GM12878 (cell line): ENCODE measurements at regions of chr17 and their contacts with region 1.

Region 1: DNA sequence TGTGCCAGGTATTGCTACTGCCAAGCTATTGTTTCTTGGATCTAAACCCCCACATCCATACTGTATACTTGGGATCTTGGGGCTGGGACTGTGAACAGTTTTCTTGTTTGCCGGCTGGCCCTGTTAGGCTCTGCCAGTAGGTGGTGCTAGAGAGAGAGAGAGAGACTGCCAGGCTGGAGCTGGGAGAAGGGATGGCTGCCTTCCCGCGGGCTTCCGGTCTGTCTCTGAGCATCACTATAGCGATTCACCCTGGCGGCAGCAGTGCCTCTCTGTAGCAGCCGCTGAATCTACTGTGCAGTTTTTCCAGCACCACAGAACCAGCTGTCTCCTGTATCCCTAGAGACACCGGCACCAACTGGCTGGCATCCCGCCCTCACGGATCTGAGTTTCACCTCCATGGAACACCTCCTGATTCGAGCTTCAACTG is 201.2 kb downstream of the UTP18 start:
- DNase-seq: no peak
- ATAC-seq: peak; percentile 86
- H3K4me3 ChIP-seq: no peak overlapping the region
- H3K27ac ChIP-seq: no peak overlapping the region
- H3K4me1 ChIP-seq: no peaks in the 10 kb centered on the region
- H3K27me3 ChIP-seq: no peaks in the 10 kb centered on the region
- CTCF ChIP-seq: peak; percentile 70 to 96 (median 87)
- EP300 ChIP-seq: no peak
- POLR2A ChIP-seq: no peak
- RAD21 ChIP-seq: peak; percentile 27; the same call in 1 of the 2 replicates

Region 2: DNA sequence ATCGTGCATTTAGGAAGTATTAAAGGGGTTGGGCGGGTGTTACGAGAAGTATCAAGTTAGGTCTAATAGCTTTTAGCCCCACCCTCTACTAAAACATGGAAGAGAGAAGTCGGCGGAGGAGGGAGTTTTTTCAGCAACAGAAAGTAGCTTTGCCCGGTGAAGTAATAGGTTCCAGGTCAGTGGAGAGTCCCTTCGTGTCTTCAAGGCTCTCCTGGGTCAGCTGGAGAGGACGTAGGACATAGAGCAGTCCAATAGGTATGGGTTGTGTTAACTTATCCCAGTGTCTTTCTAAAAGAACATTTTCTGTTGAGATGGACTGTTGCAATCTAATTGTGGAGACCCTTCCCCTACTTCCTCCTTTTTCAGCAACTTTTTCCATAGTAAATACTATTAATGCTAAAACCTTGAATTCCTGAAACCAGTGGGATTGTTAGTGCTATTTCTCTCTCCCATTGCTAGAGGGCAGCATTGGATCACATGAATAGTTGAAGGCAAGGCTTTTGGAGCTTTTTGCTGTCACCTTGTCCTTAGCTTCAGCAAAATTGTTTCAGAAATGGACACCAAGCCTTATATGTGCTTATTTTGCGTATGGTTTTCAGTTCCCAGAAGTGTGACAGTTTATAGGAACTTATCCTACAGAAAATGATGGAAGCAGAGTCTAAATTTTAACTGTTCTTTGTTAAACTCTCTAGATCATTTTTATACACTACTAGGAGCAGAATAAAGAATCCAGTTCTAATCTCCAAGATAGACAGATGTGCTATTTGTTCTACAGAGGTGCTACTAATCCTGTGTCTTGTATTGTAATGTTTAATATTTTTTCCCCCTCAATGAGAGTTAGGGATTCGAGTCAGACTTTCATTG is 162.9 kb before region 1 on chr17:
- CTCF ChIA-PET with region 1: interaction called, 14 read pairs
- POLR2A ChIA-PET with region 1: no interaction called
- RAD21 ChIA-PET with region 1: no interaction called
- SMC1A ChIA-PET with region 1: no interaction called
- in situ Hi-C with region 1: no loop called
- intact Hi-C with region 1: no loop called
- DNase-seq: no peak
- ATAC-seq: 0 out of 3 replicates have a peak, but pooled peaks have one; percentile 38
- H3K4me3 ChIP-seq: no peak overlapping the region
- H3K27ac ChIP-seq: no peak overlapping the region
- H3K4me1 ChIP-seq: no peaks in the 10 kb centered on the region
- H3K27me3 ChIP-seq: no peaks in the 10 kb centered on the region
- CTCF ChIP-seq: peak; percentile 62 to 68 (median 63); a peak in 5 of 6 replicates
- EP300 ChIP-seq: no peak
- POLR2A ChIP-seq: no peak
- RAD21 ChIP-seq: peak; percentile 63

Region 3: GRCh38 chr17:51371732-51372151 is 89.8 kb before region 1 on chr17:
- CTCF ChIA-PET with region 1: interaction called, 12 read pairs
- POLR2A ChIA-PET with region 1: no interaction called
- RAD21 ChIA-PET with region 1: interaction called, 3 read pairs
- SMC1A ChIA-PET with region 1: no interaction called
- in situ Hi-C with region 1: no loop called
- intact Hi-C with region 1: no loop called
- DNase-seq: peak; percentile 28
- ATAC-seq: peak; percentile 92
- H3K4me3 ChIP-seq: peak overlapping the region; percentile 63; the same call in 1 of the 2 replicates
- H3K27ac ChIP-seq: 0 out of 2 replicates have a peak overlapping the region, but pooled peaks have one; percentile 50
- H3K4me1 ChIP-seq: peaks cover 3% of the 10 kb centered on the region; the same call in 1 of the 2 replicates
- H3K27me3 ChIP-seq: no peaks in the 10 kb centered on the region
- CTCF ChIP-seq: peak; percentile 50 to 74 (median 62)
- EP300 ChIP-seq: no peak
- POLR2A ChIP-seq: no peak
- RAD21 ChIP-seq: peak; percentile 72

Region 4: DNA sequence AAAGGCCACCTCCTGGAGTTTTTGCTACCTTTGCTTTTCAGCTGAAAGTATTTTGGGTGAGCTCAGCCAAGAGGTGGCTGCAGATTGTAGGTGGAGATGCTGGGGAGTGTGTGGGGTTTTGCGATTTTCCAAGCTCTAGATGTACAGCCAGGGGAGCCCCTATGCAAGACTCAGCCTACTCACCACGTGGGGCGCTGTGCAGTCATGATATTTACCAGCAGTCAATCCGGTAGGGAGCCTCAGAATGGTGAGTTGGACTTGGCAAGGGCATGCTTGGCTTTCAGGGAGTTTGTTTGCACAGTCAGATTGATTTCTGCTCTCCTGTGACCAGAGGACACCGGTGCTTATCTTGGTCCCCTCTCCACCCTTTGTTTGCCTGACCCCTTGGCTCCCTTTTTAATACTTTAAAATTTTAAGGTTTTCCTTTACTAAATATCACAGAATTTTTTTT is 25.9 kb before region 1 on chr17:
- CTCF ChIA-PET with region 1: interaction called, 12 read pairs
- POLR2A ChIA-PET with region 1: no interaction called
- RAD21 ChIA-PET with region 1: no interaction called
- SMC1A ChIA-PET with region 1: no interaction called
- in situ Hi-C with region 1: no loop called
- intact Hi-C with region 1: no loop called
- DNase-seq: no peak
- ATAC-seq: peak; percentile 86
- H3K4me3 ChIP-seq: no peak overlapping the region
- H3K27ac ChIP-seq: no peak overlapping the region
- H3K4me1 ChIP-seq: no peaks in the 10 kb centered on the region
- H3K27me3 ChIP-seq: no peaks in the 10 kb centered on the region; a peak in 1 of 4 replicates
- CTCF ChIP-seq: peak; percentile 42 to 59 (median 48)
- EP300 ChIP-seq: no peak
- POLR2A ChIP-seq: no peak
- RAD21 ChIP-seq: no peak

Region 5: GRCh38 chr17:51572115-51572514 is 110.5 kb after region 1 on chr17:
- CTCF ChIA-PET with region 1: no interaction called
- POLR2A ChIA-PET with region 1: no interaction called
- RAD21 ChIA-PET with region 1: no interaction called
- SMC1A ChIA-PET with region 1: no interaction called
- in situ Hi-C with region 1: no loop called
- intact Hi-C with region 1: no loop called
- DNase-seq: no peak
- ATAC-seq: no peak
- H3K4me3 ChIP-seq: no peak overlapping the region
- H3K27ac ChIP-seq: no peak overlapping the region
- H3K4me1 ChIP-seq: no peaks in the 10 kb centered on the region
- H3K27me3 ChIP-seq: no peaks in the 10 kb centered on the region
- CTCF ChIP-seq: no peak
- EP300 ChIP-seq: no peak
- POLR2A ChIP-seq: no peak
- RAD21 ChIP-seq: no peak

Region 6: DNA sequence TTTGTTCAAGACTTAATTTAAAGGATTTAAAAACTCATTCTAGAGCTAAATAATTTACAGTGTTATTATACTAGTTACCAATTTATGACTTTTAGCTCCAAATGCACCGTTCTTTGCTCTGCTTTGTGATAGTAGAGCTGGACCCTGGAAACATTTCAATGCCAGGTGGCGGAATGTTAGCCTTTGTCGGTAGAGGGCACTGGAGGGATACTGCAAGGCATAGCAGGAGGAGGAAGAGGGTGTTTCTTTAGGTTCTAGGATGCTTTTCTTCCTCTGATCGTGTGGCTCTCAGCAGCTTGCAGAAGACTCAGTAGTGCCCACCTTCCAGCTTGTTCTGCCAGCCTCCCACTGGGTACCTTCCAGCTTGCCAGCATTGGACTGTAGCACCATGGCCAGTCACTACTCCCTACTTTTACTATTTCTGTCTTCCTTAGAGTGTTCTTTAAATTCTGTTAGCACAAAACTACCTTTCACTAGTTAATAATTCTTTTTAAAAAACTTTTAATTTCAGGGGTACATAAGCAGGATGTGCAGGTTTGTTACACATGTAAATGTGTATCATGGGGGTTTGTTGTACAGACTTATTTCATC is 124.0 kb after region 1 on chr17:
- CTCF ChIA-PET with region 1: no interaction called
- POLR2A ChIA-PET with region 1: no interaction called
- RAD21 ChIA-PET with region 1: no interaction called
- SMC1A ChIA-PET with region 1: no interaction called
- in situ Hi-C with region 1: no loop called
- intact Hi-C with region 1: no loop called
- DNase-seq: no peak
- ATAC-seq: no peak
- H3K4me3 ChIP-seq: no peak overlapping the region
- H3K27ac ChIP-seq: no peak overlapping the region
- H3K4me1 ChIP-seq: no peaks in the 10 kb centered on the region
- H3K27me3 ChIP-seq: no peaks in the 10 kb centered on the region
- CTCF ChIP-seq: peak in 2 of 3 experiments; percentile 17 to 27; a peak in 2 of 6 replicates
- EP300 ChIP-seq: no peak
- POLR2A ChIP-seq: no peak
- RAD21 ChIP-seq: no peak